ENCODE measurements at regions of chr14 and their contacts with region 1.

Region 1: DNA sequence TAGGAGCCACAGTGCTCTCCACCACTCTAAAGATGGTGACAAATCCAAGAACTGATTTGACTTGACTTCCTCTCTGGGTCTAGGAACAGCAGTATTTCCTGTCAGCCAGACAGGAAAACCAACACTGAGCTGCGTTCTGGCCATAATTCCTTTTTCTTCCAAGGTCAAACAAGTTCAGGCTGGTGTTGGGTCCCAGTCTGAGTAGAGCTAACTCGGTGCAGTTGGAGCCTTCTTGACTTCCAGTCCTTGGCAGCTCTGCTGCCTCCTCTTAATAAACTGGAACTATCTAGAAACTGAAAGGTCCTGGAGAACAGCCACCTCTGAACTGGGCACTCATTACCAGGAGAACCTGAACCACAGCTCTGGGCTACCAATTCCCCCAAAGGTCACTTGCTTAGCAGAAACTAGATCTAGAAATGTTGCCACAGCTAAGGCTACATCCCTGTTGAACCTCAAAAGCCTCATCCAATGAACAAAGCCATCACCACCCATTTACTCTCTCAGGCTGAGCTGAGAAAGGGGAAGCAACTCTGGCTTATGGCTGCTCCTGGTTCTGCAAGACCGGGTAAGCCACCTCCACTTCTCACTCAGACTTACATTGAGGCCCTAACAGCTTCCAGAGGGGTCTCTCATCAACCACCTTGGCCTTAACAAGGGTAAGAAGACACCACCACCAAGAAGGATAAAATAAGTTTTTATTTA is 27.7 kb downstream of the MAX start:
- DNase-seq: peak in 1 of 35 experiments; percentile 6
- ATAC-seq: no peak
- H3K4me3 ChIP-seq: no peak overlapping the region
- H3K4me3 Mint-ChIP-seq: no peak overlapping the region
- H3K27ac ChIP-seq: no peak overlapping the region
- H3K27ac Mint-ChIP-seq: peak overlapping the region; percentile 41
- H3K4me1 ChIP-seq: peaks cover 4 to 10% of the 10 kb centered on the region in 2 experiments
- H3K4me1 Mint-ChIP-seq: peaks cover 31 to 42% (median 34%) of the 10 kb centered on the region in 3 donors
- H3K27me3 ChIP-seq: no peaks in the 10 kb centered on the region
- H3K27me3 Mint-ChIP-seq: no peaks in the 10 kb centered on the region

Region 2: DNA sequence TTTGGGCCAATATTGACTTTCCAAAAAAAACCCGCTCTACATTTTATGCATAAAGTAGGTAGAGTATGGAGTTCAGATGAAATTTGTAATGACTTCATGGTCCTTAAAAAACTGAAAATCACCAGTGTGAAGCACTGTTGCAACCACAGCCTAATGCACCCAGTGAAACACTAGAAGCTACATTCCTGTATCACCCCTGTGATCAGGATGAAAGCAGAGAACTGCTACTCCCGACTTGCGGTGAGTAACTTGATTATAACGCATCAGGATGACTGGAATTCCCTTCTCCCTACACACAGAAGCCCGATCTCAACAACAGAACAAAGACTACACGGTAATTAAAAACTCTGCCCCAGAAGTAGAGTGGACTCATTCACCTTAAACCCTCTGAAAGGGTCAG is 228.7 kb before region 1 on chr14:
- CTCF ChIA-PET with region 1: no interaction called
- POLR2A ChIA-PET with region 1: no interaction called
- DNase-seq: no peak
- ATAC-seq: no peak
- H3K4me3 ChIP-seq: no peak overlapping the region
- H3K4me3 Mint-ChIP-seq: no peak overlapping the region
- H3K27ac ChIP-seq: no peak overlapping the region
- H3K27ac Mint-ChIP-seq: no peak overlapping the region
- H3K4me1 ChIP-seq: no peaks in the 10 kb centered on the region
- H3K4me1 Mint-ChIP-seq: peaks cover 0 to 7% (median 4%) of the 10 kb centered on the region in 3 donors
- H3K27me3 ChIP-seq: peaks cover 4 to 22% of the 10 kb centered on the region in 2 experiments
- H3K27me3 Mint-ChIP-seq: peaks cover 35 to 58% of the 10 kb centered on the region in 2 donors

Region 3: GRCh38 chr14:64952598-64953309 is 121.8 kb before region 1 on chr14:
- CTCF ChIA-PET with region 1: no interaction called
- POLR2A ChIA-PET with region 1: interaction called in 1 of 2 experiments, 14 read pairs
- DNase-seq: no peak
- ATAC-seq: peak in 1 of 4 experiments; percentile 10
- H3K4me3 ChIP-seq: no peak overlapping the region
- H3K4me3 Mint-ChIP-seq: no peak overlapping the region
- H3K27ac ChIP-seq: no peak overlapping the region
- H3K27ac Mint-ChIP-seq: peak overlapping the region in 1 of 2 donors; percentile 34
- H3K4me1 ChIP-seq: no peaks in the 10 kb centered on the region
- H3K4me1 Mint-ChIP-seq: peaks cover 4 to 19% (median 4%) of the 10 kb centered on the region in 3 donors
- H3K27me3 ChIP-seq: no peaks in the 10 kb centered on the region
- H3K27me3 Mint-ChIP-seq: no peaks in the 10 kb centered on the region

Region 4: DNA sequence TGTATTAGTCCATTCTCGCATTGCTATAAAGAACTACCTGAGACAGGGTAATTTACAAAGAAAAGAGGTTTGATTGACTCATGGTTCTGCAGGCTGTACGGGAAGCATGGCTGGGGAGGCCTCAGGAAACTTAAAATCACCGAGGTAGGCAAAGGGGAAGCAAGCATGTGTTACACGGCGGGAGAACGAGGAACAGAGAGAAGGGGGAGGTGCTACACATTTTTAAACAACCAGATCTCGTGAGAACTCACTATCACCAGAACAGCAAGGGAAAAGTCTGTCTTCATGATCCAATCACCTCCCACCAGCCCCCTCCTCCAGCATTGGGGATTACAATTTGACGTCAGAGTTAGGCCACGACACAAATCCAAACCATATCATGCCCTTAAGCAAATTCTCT is 41.0 kb after region 1 on chr14:
- CTCF ChIA-PET with region 1: no interaction called
- POLR2A ChIA-PET with region 1: no interaction called
- DNase-seq: no peak
- ATAC-seq: no peak
- H3K4me3 ChIP-seq: no peak overlapping the region
- H3K4me3 Mint-ChIP-seq: no peak overlapping the region
- H3K27ac ChIP-seq: no peak overlapping the region
- H3K27ac Mint-ChIP-seq: no peak overlapping the region
- H3K4me1 ChIP-seq: no peaks in the 10 kb centered on the region
- H3K4me1 Mint-ChIP-seq: no peaks in the 10 kb centered on the region
- H3K27me3 ChIP-seq: no peaks in the 10 kb centered on the region
- H3K27me3 Mint-ChIP-seq: peaks cover 0 to 1% of the 10 kb centered on the region in 2 donors

Region 5: DNA sequence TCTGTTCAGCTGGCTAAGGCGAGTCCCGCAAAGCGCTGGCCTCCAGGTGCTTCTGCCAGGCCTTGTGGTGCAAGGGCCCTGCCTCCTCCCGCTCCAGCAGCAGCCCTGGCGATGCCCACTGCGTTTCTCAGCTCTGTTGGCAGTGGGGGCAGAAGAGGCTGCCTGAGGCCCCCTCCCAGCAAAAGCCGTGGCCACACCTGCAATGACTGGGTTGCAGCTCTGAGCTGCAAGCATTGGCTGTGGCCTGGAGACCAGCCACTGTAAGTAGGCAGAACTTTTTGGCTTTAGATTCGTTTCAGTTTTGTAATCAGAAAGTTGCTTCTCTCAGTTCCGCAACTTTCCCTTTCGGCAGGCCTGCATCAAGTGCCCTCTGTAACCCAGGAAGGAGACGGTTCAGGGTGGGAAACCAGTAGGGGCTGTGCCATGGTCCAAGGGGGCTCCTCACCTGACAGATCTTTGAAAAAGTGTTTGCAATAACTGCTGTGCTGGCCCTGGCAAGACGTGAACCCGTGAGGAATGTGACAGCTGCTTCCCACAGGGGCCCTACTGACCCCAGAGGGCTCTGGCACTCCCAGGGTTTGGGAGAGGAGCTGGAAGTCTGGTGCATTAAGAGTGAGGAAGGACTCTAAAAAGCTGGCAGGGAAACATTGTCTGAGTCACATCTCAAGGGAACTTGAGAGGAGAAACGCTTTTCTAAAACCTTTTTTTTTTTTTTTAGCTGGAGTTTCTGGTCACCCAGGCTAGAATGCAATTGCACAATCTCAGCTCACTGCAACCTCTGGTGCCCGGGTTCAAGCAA is 82.2 kb after region 1 on chr14:
- CTCF ChIA-PET with region 1: no interaction called
- POLR2A ChIA-PET with region 1: no interaction called
- DNase-seq: no peak
- ATAC-seq: no peak
- H3K4me3 ChIP-seq: no peak overlapping the region
- H3K4me3 Mint-ChIP-seq: no peak overlapping the region
- H3K27ac ChIP-seq: no peak overlapping the region
- H3K27ac Mint-ChIP-seq: no peak overlapping the region
- H3K4me1 ChIP-seq: no peaks in the 10 kb centered on the region
- H3K4me1 Mint-ChIP-seq: no peaks in the 10 kb centered on the region
- H3K27me3 ChIP-seq: no peaks in the 10 kb centered on the region
- H3K27me3 Mint-ChIP-seq: peaks cover 0 to 3% of the 10 kb centered on the region in 2 donors